ENCODE measurements at regions of chr9 and their contacts with region 1.

Region 1: DNA sequence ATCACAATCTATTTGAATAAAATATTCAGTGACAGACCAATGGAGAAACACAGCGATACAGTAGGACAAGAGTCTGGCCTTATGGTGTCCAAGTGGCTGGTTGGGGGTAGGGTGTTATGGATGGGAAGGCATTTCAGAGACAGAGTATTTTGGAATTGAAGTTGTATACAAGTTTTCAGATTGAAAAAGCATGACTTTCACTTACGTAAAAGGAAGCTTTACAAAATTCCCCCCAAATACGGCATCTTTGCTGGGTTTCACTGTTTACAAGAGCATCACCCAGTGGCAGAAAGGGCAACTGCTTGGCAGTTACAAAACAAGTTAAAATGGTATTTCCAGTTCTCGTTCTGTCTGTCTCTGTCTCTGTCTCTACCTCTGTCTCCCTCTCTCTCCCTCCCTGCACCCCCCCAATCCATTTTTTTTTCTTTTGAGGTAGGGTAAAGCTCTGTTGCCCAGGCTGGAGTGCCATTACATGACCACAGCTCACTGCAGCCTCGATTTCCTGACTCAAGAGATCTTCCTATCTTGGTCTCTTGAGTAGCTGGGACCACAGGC is 86.2 kb downstream of the PTPN3 start:
- DNase-seq: no peak
- ATAC-seq: no peak
- H3K4me3 ChIP-seq: no peak overlapping the region
- H3K4me3 Mint-ChIP-seq: peak overlapping the region in 1 of 10 donors; percentile 48
- H3K27ac ChIP-seq: no peak overlapping the region
- H3K27ac Mint-ChIP-seq: peak overlapping the region in 1 of 9 donors; percentile 81
- H3K4me1 ChIP-seq: no peaks in the 10 kb centered on the region
- H3K4me1 Mint-ChIP-seq: peaks cover 0 to 53% (median 0%) of the 10 kb centered on the region in 7 donors
- H3K27me3 ChIP-seq: no peaks in the 10 kb centered on the region
- H3K27me3 Mint-ChIP-seq: peaks cover 0 to 21% (median 17%) of the 10 kb centered on the region in 5 donors

Region 2: DNA sequence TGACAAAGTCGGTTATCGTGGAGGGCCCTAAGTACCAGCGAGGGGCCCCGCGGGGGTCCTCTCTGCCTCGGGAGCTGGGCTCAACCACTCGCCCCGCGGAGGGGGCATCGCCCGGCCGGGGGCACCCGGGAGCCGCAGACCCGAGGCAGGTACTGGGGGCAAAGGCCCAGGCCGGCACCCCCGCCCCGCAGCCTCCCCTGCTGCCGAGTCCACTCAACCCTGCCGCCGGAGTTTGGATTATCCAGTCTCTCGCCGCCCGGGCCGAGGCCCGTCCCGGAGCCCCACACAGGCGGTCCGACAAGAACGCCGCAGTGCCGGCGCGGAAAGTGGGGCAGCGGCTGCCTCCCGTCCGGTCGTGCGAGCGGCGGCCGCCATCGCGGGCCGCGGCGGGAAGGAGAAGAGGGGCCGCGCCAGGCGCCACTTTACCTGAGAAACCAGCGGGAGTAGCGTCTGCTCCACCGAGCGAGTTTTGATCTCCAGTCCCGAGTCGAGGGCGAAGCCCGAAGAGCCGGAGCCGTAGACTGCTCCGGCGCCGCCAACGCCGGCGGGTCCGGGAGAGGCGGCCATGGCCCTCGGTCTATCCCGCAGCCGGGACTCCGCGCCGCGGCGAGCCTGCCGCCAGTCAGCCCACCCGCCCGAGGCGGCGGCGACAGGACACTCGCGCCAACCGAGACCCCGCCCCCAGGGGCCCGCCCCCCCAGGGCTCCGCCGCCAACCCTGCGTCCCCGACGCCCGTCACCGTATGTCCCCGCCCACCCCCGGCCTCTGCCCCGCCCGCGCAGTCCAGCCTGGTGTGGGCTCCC is 398.8 kb before region 1 on chr9 and contains the start of gene CTNNAL1:
- CTCF ChIA-PET with region 1: no interaction called
- POLR2A ChIA-PET with region 1: no interaction called
- intact Hi-C with region 1: loop called in 1 of 2 experiments (anchors 10 kb)
- DNase-seq: peak; percentile 68 to 88 (median 78)
- ATAC-seq: peak; percentile 98
- H3K4me3 ChIP-seq: peak within 1 kb of the TSS; percentile 72
- H3K4me3 Mint-ChIP-seq: peak within 1 kb of the TSS; percentile 93 to 99 (median 97)
- H3K27ac ChIP-seq: peak within 1 kb of the TSS; percentile 77
- H3K27ac Mint-ChIP-seq: peak within 1 kb of the TSS; percentile 79 to 95 (median 92)
- H3K4me1 ChIP-seq: peaks cover 6 to 13% of the 10 kb centered on the region in 2 donors
- H3K4me1 Mint-ChIP-seq: peaks cover 17 to 34% (median 21%) of the 10 kb centered on the region in 7 donors
- H3K27me3 ChIP-seq: no peaks in the 10 kb centered on the region
- H3K27me3 Mint-ChIP-seq: peaks cover 0 to 22% (median 4%) of the 10 kb centered on the region in 5 donors
- total RNA-seq, gene CTNNAL1: 1.1 to 9.9 (median 2.5) TPM

Region 3: GRCh38 chr9:109052416-109052815 is 359.5 kb before region 1 on chr9:
- CTCF ChIA-PET with region 1: no interaction called
- POLR2A ChIA-PET with region 1: no interaction called
- intact Hi-C with region 1: no loop called
- DNase-seq: no peak
- ATAC-seq: no peak
- H3K4me3 ChIP-seq: no peak overlapping the region
- H3K4me3 Mint-ChIP-seq: no peak overlapping the region
- H3K27ac ChIP-seq: no peak overlapping the region
- H3K27ac Mint-ChIP-seq: no peak overlapping the region
- H3K4me1 ChIP-seq: no peaks in the 10 kb centered on the region
- H3K4me1 Mint-ChIP-seq: peaks cover 0 to 4% (median 0%) of the 10 kb centered on the region in 7 donors
- H3K27me3 ChIP-seq: no peaks in the 10 kb centered on the region
- H3K27me3 Mint-ChIP-seq: no peaks in the 10 kb centered on the region

Region 4: DNA sequence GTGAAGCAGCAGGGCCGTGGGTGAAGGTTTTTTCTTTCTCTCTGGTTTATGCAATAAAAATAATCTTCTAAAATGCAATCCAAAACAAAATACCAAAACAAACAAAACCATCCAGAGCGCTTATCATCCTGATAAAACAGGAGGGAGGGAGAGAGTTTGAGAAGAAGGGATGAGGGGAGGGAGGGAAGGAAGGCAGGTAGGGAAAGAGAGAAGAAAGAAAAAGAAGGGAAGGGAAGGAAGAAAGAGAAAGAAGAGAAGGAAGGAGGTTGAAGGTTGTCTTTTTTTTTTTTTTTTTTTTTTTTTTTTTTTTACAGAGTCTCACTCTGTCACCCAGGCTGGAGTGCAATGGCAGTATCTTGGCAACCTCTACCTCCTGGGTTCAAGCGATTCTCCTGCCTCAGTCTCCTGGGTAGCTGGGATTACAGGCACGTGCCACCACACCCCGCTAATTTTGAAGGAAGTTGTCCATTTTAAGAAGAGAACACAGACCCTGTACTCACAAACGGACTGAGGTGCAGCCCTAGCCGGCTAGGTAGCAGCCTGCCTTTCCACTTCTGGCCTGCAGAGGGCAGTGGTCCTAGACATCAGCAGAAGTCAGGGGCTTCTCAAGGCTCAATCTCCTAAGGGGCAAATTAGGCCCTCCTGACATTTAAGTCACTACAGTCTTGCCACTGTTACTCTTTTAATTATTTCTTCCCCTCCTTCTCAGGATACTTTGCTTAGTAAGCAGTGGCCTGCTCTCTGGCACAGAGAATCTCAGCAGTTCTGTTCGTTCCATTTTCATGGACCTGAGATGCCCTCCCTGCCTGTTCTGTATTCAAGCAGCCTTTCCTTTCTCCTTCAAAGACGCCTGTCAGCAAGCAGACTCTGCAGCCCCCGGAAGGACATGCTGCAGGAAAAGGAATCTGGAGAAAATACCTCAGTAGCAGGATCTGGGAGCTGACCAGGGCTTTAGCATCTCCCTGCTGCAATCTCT is 167.4 kb before region 1 on chr9:
- CTCF ChIA-PET with region 1: no interaction called
- POLR2A ChIA-PET with region 1: no interaction called
- intact Hi-C with region 1: loop called in 1 of 2 experiments (anchors 5 kb)
- DNase-seq: peak; percentile 10 to 64 (median 40)
- ATAC-seq: peak; percentile 81
- H3K4me3 ChIP-seq: no peak overlapping the region
- H3K4me3 Mint-ChIP-seq: peak overlapping the region in 1 of 10 donors; percentile 56
- H3K27ac ChIP-seq: no peak overlapping the region
- H3K27ac Mint-ChIP-seq: peak overlapping the region in 1 of 9 donors; percentile 54
- H3K4me1 ChIP-seq: no peaks in the 10 kb centered on the region
- H3K4me1 Mint-ChIP-seq: no peaks in the 10 kb centered on the region
- H3K27me3 ChIP-seq: no peaks in the 10 kb centered on the region
- H3K27me3 Mint-ChIP-seq: peaks cover 22 to 39% (median 27%) of the 10 kb centered on the region in 5 donors

Region 5: GRCh38 chr9:109454041-109454440 is 42.2 kb after region 1 on chr9:
- CTCF ChIA-PET with region 1: no interaction called
- POLR2A ChIA-PET with region 1: no interaction called
- intact Hi-C with region 1: no loop called
- DNase-seq: no peak
- ATAC-seq: no peak
- H3K4me3 ChIP-seq: no peak overlapping the region
- H3K4me3 Mint-ChIP-seq: no peak overlapping the region
- H3K27ac ChIP-seq: no peak overlapping the region
- H3K27ac Mint-ChIP-seq: no peak overlapping the region
- H3K4me1 ChIP-seq: no peaks in the 10 kb centered on the region
- H3K4me1 Mint-ChIP-seq: peaks cover 0 to 19% (median 0%) of the 10 kb centered on the region in 7 donors
- H3K27me3 ChIP-seq: no peaks in the 10 kb centered on the region
- H3K27me3 Mint-ChIP-seq: peaks cover 14 to 46% (median 20%) of the 10 kb centered on the region in 5 donors

Region 6: GRCh38 chr9:109463924-109464625 is 52.2 kb after region 1 on chr9:
- CTCF ChIA-PET with region 1: no interaction called
- POLR2A ChIA-PET with region 1: no interaction called
- intact Hi-C with region 1: loop called in 1 of 2 experiments (anchors 5 kb)
- DNase-seq: peak in 1 of 9 donors; percentile 47
- ATAC-seq: no peak
- H3K4me3 ChIP-seq: no peak overlapping the region
- H3K4me3 Mint-ChIP-seq: peak overlapping the region in 1 of 10 donors; percentile 55
- H3K27ac ChIP-seq: no peak overlapping the region
- H3K27ac Mint-ChIP-seq: peak overlapping the region in 1 of 9 donors; percentile 76
- H3K4me1 ChIP-seq: no peaks in the 10 kb centered on the region
- H3K4me1 Mint-ChIP-seq: peaks cover 0 to 57% (median 0%) of the 10 kb centered on the region in 7 donors
- H3K27me3 ChIP-seq: no peaks in the 10 kb centered on the region
- H3K27me3 Mint-ChIP-seq: peaks cover 5 to 38% (median 10%) of the 10 kb centered on the region in 5 donors

Measured in naive thymus-derived CD4-positive, alpha-beta T cell (primary cell).